Left cardiac atrium (tissue), 4 donors: ENCODE measurements at regions of chr20 and their contacts with region 1.

Region 1: DNA sequence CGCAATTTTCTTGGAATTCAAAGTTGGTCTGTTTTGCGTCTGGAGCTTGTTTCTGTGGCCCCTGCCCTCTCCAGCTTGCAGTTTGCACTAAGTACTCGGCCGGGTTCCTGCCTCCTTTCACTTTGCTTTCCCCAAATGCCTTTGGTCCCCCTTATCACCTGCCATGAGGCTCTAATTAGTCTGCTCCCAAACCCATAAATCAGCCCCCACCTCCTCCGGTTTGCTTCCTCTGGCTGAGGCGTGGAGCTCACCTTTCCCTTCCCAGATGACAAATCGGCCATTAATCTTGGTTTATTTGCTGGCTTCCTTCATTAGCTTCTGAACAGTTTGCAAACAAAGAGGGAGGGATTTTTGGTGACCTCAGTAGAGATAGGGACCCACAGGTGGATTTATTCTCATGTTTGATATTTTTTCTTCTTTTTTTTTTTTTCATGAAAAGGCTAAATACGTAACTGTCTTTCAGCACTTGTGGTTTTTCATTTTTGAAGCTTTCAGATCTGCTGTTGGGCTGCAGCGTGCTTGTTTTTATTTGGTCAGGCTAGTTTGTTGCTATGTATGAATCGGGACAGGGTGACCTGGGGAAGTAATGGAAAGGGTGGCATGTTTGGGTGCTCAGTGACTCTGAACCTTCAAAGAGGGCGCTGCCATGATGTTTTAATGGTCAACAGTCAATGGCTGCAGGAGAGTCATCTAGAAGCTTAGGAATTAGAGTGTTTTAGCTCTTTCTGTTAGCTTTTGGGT is 121.7 kb upstream of the JAG1 start:
- DNase-seq: no peak
- ATAC-seq: no peak

Region 2: GRCh38 chr20:10034717-10035571 is 760.5 kb before region 1 on chr20 and contains the start of gene ANKEF1:
- intact Hi-C with region 1: no loop called
- DNase-seq: peak; percentile 75
- ATAC-seq: peak; percentile 98 to 99
- total RNA-seq, gene ANKEF1: 2.3 to 2.5 TPM

Region 3: GRCh38 chr20:10469599-10469998 is 325.9 kb before region 1 on chr20:
- intact Hi-C with region 1: no loop called
- DNase-seq: peak; percentile 28
- ATAC-seq: peak; percentile 62 to 80

Region 4: GRCh38 chr20:10812759-10813327 is 17.4 kb after region 1 on chr20:
- intact Hi-C with region 1: loop called in 1 of 2 experiments (anchors 1 kb)
- DNase-seq: no peak
- ATAC-seq: no peak

Region 5: DNA sequence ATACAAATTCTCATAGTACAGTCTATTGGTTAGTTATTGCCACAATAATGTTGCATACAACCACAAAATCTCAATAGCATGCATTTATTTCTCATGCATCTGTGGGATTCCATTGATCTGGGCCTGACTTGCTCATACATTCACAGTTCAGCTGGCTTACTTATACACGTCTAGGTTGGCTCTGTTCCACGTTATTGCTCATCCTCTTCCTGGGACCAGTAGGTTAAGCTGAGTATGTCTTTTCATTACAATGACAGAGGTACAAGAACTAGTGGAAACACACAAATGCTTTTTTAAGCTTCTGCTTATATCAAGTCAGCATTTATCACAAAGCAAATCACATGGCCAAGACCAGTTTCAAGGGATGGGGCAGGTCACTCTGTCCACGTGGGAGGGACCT is 637.0 kb after region 1 on chr20:
- intact Hi-C with region 1: no loop called
- DNase-seq: no peak
- ATAC-seq: no peak